ENCODE measurements at regions of chr21 and their contacts with region 1.

Region 1: DNA sequence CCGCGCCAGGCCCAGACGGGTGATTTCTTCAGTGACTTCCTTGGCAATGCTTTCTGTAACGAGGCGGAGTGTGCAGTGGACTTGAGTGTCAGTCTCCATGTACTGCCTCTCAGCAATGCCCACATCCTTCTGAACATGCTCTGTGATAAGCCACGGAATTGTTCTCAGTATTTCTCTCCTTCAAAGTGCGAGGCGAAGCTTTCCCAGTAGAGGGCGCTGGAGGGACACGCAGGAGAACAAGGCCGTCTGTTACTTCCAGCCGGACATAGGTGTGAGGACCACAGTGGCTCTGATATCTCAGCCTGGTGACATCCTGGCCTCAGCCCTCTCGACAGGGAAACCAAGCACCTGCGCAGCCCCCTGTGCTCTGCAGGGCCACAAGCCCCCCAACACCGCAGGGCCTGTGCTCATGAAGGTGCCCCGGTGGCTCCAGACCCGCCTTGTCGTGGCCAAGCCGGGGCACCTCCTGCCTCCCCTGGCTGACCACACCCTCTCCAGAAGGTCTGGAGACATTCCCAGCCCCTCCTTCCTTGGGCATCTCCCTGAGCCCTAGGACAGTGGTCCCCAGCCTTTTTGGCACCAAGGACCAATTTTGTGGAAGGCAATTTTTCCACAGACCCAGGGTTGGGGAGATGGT is 46.1 kb upstream of the BACE2 start:
- DNase-seq: peak; percentile 92
- ATAC-seq: peak; percentile 90

Region 2: GRCh38 chr21:40919805-40920204 is 202.1 kb before region 1 on chr21:
- intact Hi-C with region 1: no loop called
- DNase-seq: no peak
- ATAC-seq: no peak

Region 3: DNA sequence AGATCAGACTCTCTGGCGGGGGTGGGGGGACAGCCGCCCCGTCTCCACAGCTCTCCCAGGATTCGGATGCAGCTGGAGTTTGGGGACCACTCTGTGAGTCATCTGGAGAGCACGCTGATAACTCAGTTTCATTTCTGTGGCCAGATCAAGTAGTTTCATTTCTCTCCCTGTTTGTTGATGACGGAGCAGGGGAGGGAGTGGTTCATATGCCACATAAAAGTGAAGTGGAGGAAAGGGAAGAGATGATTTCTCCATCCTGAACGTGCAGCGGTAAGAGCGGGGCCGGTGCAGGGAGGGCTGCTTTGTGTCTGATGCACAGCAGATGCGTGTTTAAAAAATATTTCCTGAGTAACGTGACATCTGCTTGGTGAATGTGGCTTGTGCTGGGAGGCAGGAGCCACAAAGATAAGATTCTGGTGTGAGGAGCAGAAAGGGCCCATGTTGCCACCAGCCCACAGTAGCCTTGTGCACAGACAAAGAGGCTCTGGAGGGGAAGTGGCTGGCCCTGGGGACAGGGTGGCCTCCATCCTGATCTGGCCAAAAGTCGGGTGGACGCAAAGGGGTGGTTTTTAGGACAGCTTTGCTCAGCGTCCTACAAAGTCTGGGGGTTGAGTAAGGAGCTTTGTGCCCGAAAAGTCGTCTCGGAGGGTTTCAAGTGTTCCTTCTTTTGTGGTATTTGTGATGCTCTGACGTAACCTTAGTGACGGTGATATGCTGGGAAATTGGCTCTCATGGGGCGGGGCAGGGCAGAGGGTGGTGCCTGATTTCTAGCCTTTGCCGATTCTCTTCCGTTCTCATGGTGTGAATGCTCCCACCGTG is 240.1 kb after region 1 on chr21 and contains the start of gene MX2:
- intact Hi-C with region 1: loop called (anchors 10 kb)
- DNase-seq: peak; percentile 80
- ATAC-seq: peak; percentile 91
- total RNA-seq, gene MX2: 19.0 TPM

Measured in sciatic nerve (tissue), 2 donors.